ENCODE measurements at regions of chr2 and their contacts with region 1.

Region 1: GRCh38 chr2:43484323-43484930 is 111.4 kb downstream of the THADA start:
- DNase-seq: peak; percentile 84
- H3K4me3 ChIP-seq: no peak overlapping the region
- H3K27ac ChIP-seq: no peak overlapping the region
- H3K4me1 ChIP-seq: peaks cover 7% of the 10 kb centered on the region
- H3K27me3 ChIP-seq: no peaks in the 10 kb centered on the region
- CTCF ChIP-seq: peak; percentile 31 to 32
- POLR2A ChIP-seq: no peak

Region 2: GRCh38 chr2:42828487-42829425 is 655.7 kb before region 1 on chr2:
- CTCF ChIA-PET with region 1: interaction called, 20 read pairs
- POLR2A ChIA-PET with region 1: no interaction called
- dilution Hi-C with region 1: no loop called
- intact Hi-C with region 1: loop called (anchors 1 kb)
- DNase-seq: peak; percentile 66
- H3K4me3 ChIP-seq: no peak overlapping the region
- H3K27ac ChIP-seq: no peak overlapping the region
- H3K4me1 ChIP-seq: no peaks in the 10 kb centered on the region
- H3K27me3 ChIP-seq: no peaks in the 10 kb centered on the region
- CTCF ChIP-seq: peak; percentile 91 to 93
- POLR2A ChIP-seq: no peak

Region 3: GRCh38 chr2:42944779-42945415 is 539.5 kb before region 1 on chr2:
- CTCF ChIA-PET with region 1: interaction called, 43 read pairs
- POLR2A ChIA-PET with region 1: no interaction called
- dilution Hi-C with region 1: no loop called
- intact Hi-C with region 1: loop called (anchors 1 kb)
- DNase-seq: no peak
- H3K4me3 ChIP-seq: no peak overlapping the region
- H3K27ac ChIP-seq: no peak overlapping the region
- H3K4me1 ChIP-seq: no peaks in the 10 kb centered on the region
- H3K27me3 ChIP-seq: no peaks in the 10 kb centered on the region
- CTCF ChIP-seq: no peak
- POLR2A ChIP-seq: no peak

Region 4: DNA sequence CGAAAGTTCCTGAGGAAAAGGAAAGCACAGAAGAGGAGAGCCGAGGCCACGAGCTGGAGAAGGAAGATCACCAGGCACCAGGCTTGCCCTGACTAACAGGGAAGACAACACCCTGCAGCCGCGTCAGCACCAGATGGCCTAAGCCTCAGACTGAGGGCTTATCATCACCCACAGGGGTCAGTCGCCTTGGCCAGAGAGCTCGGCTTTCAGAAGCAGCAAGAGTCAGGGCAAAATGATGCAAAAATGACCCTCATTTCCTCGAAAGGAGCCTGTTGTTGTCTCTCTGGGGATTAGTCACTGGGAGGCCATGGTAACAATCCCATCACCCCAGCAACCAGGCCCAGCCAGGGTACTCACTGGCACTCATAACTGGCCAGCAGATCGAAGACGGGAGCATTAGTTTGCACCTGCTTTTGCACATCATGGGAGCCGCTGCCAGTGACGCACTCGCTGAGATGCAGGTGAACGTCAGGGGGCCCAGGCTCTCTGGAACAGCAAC is 215.3 kb before region 1 on chr2:
- CTCF ChIA-PET with region 1: interaction called, 6 read pairs
- POLR2A ChIA-PET with region 1: no interaction called
- dilution Hi-C with region 1: no loop called
- intact Hi-C with region 1: loop called (anchors 10 kb)
- DNase-seq: peak; percentile 98
- H3K4me3 ChIP-seq: no peak overlapping the region
- H3K27ac ChIP-seq: peak overlapping the region; percentile 84
- H3K4me1 ChIP-seq: peaks cover 16% of the 10 kb centered on the region
- H3K27me3 ChIP-seq: no peaks in the 10 kb centered on the region
- CTCF ChIP-seq: peak; percentile 5 to 35
- POLR2A ChIP-seq: peak; percentile 42

Region 5: GRCh38 chr2:43376523-43377198 is 107.8 kb before region 1 on chr2:
- CTCF ChIA-PET with region 1: no interaction called
- POLR2A ChIA-PET with region 1: no interaction called
- dilution Hi-C with region 1: no loop called
- intact Hi-C with region 1: no loop called
- DNase-seq: no peak
- H3K4me3 ChIP-seq: no peak overlapping the region
- H3K27ac ChIP-seq: no peak overlapping the region
- H3K4me1 ChIP-seq: no peaks in the 10 kb centered on the region
- H3K27me3 ChIP-seq: no peaks in the 10 kb centered on the region
- CTCF ChIP-seq: no peak
- POLR2A ChIP-seq: no peak

Region 6: GRCh38 chr2:43438858-43439655 is 45.4 kb before region 1 on chr2:
- CTCF ChIA-PET with region 1: no interaction called
- POLR2A ChIA-PET with region 1: no interaction called
- dilution Hi-C with region 1: no loop called
- intact Hi-C with region 1: no loop called
- DNase-seq: peak; percentile 57
- H3K4me3 ChIP-seq: no peak overlapping the region
- H3K27ac ChIP-seq: peak overlapping the region; percentile 46
- H3K4me1 ChIP-seq: peaks cover 13% of the 10 kb centered on the region
- H3K27me3 ChIP-seq: no peaks in the 10 kb centered on the region
- CTCF ChIP-seq: no peak
- POLR2A ChIP-seq: no peak

Region 7: GRCh38 chr2:43455731-43456642 is 28.4 kb before region 1 on chr2:
- CTCF ChIA-PET with region 1: interaction called, 27 read pairs
- POLR2A ChIA-PET with region 1: no interaction called
- dilution Hi-C with region 1: no loop called
- intact Hi-C with region 1: loop called (anchors 2 kb)
- DNase-seq: peak; percentile 88
- H3K4me3 ChIP-seq: peak overlapping the region in 1 of 3 experiments; percentile 28
- H3K27ac ChIP-seq: peak overlapping the region; percentile 90
- H3K4me1 ChIP-seq: peaks cover 86% of the 10 kb centered on the region
- H3K27me3 ChIP-seq: no peaks in the 10 kb centered on the region
- CTCF ChIP-seq: no peak
- POLR2A ChIP-seq: no peak

Region 8: DNA sequence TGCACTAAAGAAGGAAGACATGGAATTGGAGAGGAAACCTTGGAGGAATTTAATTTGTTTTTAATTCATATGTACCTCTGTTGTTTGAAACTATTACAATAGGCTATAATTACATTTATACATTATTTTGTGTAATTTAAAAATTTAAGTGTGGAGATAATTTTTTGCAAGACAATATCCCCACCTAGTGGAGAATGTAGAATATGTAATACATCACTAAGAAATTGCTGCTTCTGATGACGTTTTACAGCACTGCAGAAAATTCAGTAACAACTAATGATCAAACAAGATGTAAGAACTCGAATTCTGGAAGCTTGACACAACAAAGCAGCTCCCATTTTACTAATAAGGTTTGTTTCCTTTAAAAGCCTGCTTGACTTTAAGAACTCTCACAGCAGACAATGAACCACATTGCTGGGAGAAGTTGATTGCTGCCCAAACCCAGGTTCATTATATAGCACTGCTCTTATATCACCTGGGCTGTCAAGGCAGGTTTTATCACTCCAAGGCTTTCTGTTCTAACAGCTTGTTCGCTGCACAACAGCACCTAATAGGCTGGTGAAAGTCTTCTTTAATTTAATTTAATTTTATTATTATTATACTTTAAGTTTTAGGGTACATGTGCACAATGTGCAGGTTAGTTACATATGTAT is 58.0 kb after region 1 on chr2:
- CTCF ChIA-PET with region 1: interaction called, 17 read pairs
- POLR2A ChIA-PET with region 1: no interaction called
- dilution Hi-C with region 1: no loop called
- intact Hi-C with region 1: loop called (anchors 2 kb)
- DNase-seq: peak; percentile 66
- H3K4me3 ChIP-seq: no peak overlapping the region
- H3K27ac ChIP-seq: no peak overlapping the region
- H3K4me1 ChIP-seq: no peaks in the 10 kb centered on the region
- H3K27me3 ChIP-seq: no peaks in the 10 kb centered on the region
- CTCF ChIP-seq: peak in 1 of 2 donors; percentile 17
- POLR2A ChIP-seq: no peak

Measured in endothelial cell of umbilical vein (primary cell).